MCF 10A (cell line): ENCODE measurements at regions of chrX and their contacts with region 1.

Region 1: GRCh38 chrX:45110494-45110893 is 90.2 kb downstream of the DIPK2B start:
- DNase-seq: no peak
- H3K4me3 Mint-ChIP-seq: no peak overlapping the region
- H3K27ac Mint-ChIP-seq: no peak overlapping the region
- H3K4me1 Mint-ChIP-seq: no peaks in the 10 kb centered on the region
- H3K27me3 Mint-ChIP-seq: no peaks in the 10 kb centered on the region
- CTCF ChIP-seq: no peak

Region 2: GRCh38 chrX:45126158-45126557 is 15.7 kb after region 1 on chrX:
- CTCF ChIA-PET with region 1: no interaction called
- POLR2A ChIA-PET with region 1: no interaction called
- intact Hi-C with region 1: no loop called
- DNase-seq: no peak
- H3K4me3 Mint-ChIP-seq: no peak overlapping the region
- H3K27ac Mint-ChIP-seq: no peak overlapping the region
- H3K4me1 Mint-ChIP-seq: no peaks in the 10 kb centered on the region
- H3K27me3 Mint-ChIP-seq: peaks cover 43% of the 10 kb centered on the region
- CTCF ChIP-seq: no peak

Region 3: GRCh38 chrX:45372151-45372550 is 261.7 kb after region 1 on chrX:
- CTCF ChIA-PET with region 1: no interaction called
- POLR2A ChIA-PET with region 1: no interaction called
- intact Hi-C with region 1: no loop called
- DNase-seq: no peak
- H3K4me3 Mint-ChIP-seq: no peak overlapping the region
- H3K27ac Mint-ChIP-seq: no peak overlapping the region
- H3K4me1 Mint-ChIP-seq: no peaks in the 10 kb centered on the region
- H3K27me3 Mint-ChIP-seq: peaks cover 46% of the 10 kb centered on the region
- CTCF ChIP-seq: no peak

Region 4: GRCh38 chrX:45669715-45670340 is 559.3 kb after region 1 on chrX:
- CTCF ChIA-PET with region 1: no interaction called
- POLR2A ChIA-PET with region 1: no interaction called
- intact Hi-C with region 1: loop called (anchors 5 kb)
- DNase-seq: no peak
- H3K4me3 Mint-ChIP-seq: no peak overlapping the region
- H3K27ac Mint-ChIP-seq: peak overlapping the region; percentile 61
- H3K4me1 Mint-ChIP-seq: no peaks in the 10 kb centered on the region
- H3K27me3 Mint-ChIP-seq: peaks cover 15% of the 10 kb centered on the region
- CTCF ChIP-seq: no peak